Dendritic cell treated with granulocyte-macrophage colony-stimulating factor and Interleukin-4, amounts not matched to agents 40 ng/mL and 50 ng/mL, for 4 days (primary cell): ENCODE measurements at regions of chr2 and their contacts with region 1.

Region 1: DNA sequence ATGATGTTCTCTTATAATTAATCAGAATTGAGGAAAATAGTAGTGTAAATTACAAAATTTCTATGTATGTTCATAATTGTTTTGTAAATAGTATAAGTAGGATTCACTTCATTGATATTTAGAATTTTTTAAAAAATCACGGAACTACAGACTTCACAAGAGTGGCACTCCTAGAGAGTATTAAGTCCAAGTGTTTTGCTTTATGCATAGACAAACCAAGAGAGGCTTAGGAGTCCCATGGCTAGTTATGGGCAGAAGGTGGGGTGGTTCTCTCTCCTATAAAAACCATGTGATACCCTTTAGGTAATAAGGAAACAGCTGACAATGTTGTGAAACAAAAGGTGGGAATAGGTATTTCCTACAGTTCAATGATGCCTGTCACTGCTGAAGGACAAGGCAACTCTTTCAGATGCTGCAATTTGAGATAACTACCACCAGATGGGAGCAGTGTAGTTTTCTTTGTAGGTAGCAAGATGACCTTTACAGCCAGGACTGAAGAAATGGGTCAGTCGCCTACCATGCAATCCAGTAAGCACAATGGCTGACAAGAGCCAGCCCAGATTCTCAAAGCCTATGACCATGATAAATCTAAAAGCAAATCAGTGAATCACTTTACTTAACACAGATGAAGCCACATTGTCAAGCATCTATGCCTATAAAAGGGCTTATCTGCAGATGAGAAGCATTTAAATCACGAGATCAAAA is 83.9 kb downstream of the AAK1 start:
- H3K4me3 Mint-ChIP-seq: no peak overlapping the region
- H3K27ac Mint-ChIP-seq: no peak overlapping the region
- H3K4me1 Mint-ChIP-seq: peaks cover 48% of the 10 kb centered on the region
- H3K27me3 Mint-ChIP-seq: no peaks in the 10 kb centered on the region

Region 2: DNA sequence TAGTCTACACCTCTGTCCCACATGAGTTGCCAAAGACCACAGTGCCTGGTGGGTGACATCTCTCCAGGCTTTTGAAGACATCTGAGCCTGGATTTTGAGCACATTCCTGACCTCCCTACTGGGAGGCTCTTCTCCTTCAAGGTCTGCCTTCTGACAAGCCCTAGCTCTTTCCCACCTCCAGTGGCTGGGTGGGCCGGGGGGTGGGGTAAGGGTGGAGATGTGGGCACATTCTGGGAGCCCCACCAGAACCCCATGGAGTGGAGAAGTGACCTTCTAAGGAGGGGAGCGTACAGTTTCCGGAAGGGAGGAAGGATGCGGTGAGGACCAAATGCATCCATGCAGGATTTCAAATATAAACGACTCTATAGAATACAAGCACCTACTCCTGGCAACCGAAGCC is 154.4 kb after region 1 on chr2:
- intact Hi-C with region 1: loop called (anchors 1 kb)
- H3K4me3 Mint-ChIP-seq: no peak overlapping the region
- H3K27ac Mint-ChIP-seq: no peak overlapping the region
- H3K4me1 Mint-ChIP-seq: peaks cover 11% of the 10 kb centered on the region
- H3K27me3 Mint-ChIP-seq: no peaks in the 10 kb centered on the region

Region 3: GRCh38 chr2:69804416-69804815 is 244.8 kb after region 1 on chr2:
- intact Hi-C with region 1: loop called (anchors 10 kb)
- H3K4me3 Mint-ChIP-seq: no peak overlapping the region
- H3K27ac Mint-ChIP-seq: peak overlapping the region; percentile 62
- H3K4me1 Mint-ChIP-seq: peaks cover 36% of the 10 kb centered on the region
- H3K27me3 Mint-ChIP-seq: no peaks in the 10 kb centered on the region